Activated T-helper 2 cell treated with anti-CD3 and anti-CD28 coated beads, Interferon-gamma antibody, Interleukin-2, Interleukin-4, amounts not matched to agents 10 μg/mL and 5 μg/mL and 100 μg/mL, durations not matched to agents 14 hours and 24 hours and 36 hours (primary cell): ENCODE measurements at regions of chr20 and their contacts with region 1.

Region 1: DNA sequence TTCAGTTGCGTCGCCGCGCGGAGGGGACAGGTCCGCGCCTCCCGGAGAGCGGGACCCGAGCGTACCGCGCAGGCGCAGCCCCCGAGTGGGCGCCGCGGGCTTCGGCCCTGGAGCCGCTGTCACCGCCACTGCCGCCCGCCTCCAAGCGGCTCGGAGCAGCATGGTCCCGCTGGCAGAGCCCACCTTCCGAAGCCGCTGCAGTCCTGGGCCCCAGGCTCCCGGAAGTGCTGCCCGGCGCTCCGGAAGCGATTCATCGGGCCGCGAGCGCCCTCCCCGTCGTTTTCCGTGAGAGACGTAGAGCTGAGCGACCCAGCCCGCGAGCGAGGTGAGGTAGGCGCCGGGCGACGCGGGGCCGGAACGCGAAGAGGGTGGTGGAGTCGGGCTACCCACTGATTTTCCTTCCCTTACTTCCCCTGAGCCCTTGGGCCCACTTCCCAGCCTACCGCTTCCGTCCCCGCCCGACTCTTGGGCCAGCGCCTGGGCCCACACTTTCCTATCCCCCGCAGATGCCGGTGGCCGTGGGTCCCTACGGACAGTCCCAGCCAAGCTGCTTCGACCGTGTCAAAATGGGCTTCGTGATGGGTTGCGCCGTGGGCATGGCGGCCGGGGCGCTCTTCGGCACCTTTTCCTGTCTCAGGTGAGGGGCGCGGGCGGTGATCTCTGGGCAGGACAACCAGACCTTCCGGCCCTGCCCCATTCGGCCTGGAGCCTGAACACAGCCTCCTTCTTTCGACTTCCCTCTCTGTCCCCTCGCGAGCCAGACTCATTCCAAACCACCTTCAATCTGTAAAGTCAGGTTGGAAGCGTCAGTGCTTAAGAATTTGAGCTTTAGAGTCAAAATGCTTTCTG is at the starts of genes NFS1 and ROMO1:
- DNase-seq: peak; percentile 82
- H3K4me3 Mint-ChIP-seq: peak within 1 kb of the TSS; percentile 94
- H3K27ac Mint-ChIP-seq: peak within 1 kb of the TSS; percentile 94
- H3K4me1 Mint-ChIP-seq: peaks cover 31% of the 10 kb centered on the region
- H3K27me3 Mint-ChIP-seq: no peaks in the 10 kb centered on the region
- total RNA-seq, gene NFS1: 39.1 and 39.8 TPM in 2 replicates
- total RNA-seq, gene ROMO1: 93.0 and 98.4 TPM in 2 replicates

Region 2: GRCh38 chr20:35601008-35601973 is 98.1 kb before region 1 on chr20:
- intact Hi-C with region 1: loop called (anchors 5 kb)
- DNase-seq: peak; percentile 74
- H3K4me3 Mint-ChIP-seq: peak overlapping the region; percentile 71
- H3K27ac Mint-ChIP-seq: no peak overlapping the region
- H3K4me1 Mint-ChIP-seq: peaks cover 10% of the 10 kb centered on the region
- H3K27me3 Mint-ChIP-seq: peaks cover 52% of the 10 kb centered on the region